MCF 10A (cell line): ENCODE measurements at regions of chr1 and their contacts with region 1.

Region 1: GRCh38 chr1:170545476-170545875 is 13.5 kb downstream of the GORAB start:
- DNase-seq: peak; percentile 53
- H3K4me3 Mint-ChIP-seq: no peak overlapping the region
- H3K27ac Mint-ChIP-seq: peak overlapping the region; percentile 80
- H3K4me1 Mint-ChIP-seq: peaks cover 12% of the 10 kb centered on the region
- H3K27me3 Mint-ChIP-seq: no peaks in the 10 kb centered on the region
- CTCF ChIP-seq: no peak

Region 2: GRCh38 chr1:169999761-170000160 is 545.7 kb before region 1 on chr1:
- CTCF ChIA-PET with region 1: no interaction called
- POLR2A ChIA-PET with region 1: no interaction called
- intact Hi-C with region 1: loop called (anchors 10 kb)
- DNase-seq: no peak
- H3K4me3 Mint-ChIP-seq: no peak overlapping the region
- H3K27ac Mint-ChIP-seq: peak overlapping the region; percentile 70
- H3K4me1 Mint-ChIP-seq: peaks cover 9% of the 10 kb centered on the region
- H3K27me3 Mint-ChIP-seq: no peaks in the 10 kb centered on the region
- CTCF ChIP-seq: no peak

Region 3: GRCh38 chr1:170520601-170521000 is 24.9 kb before region 1 on chr1:
- CTCF ChIA-PET with region 1: no interaction called
- POLR2A ChIA-PET with region 1: no interaction called
- intact Hi-C with region 1: no loop called
- DNase-seq: no peak
- H3K4me3 Mint-ChIP-seq: no peak overlapping the region
- H3K27ac Mint-ChIP-seq: no peak overlapping the region
- H3K4me1 Mint-ChIP-seq: no peaks in the 10 kb centered on the region
- H3K27me3 Mint-ChIP-seq: peaks cover 25% of the 10 kb centered on the region
- CTCF ChIP-seq: no peak

Region 4: GRCh38 chr1:170670802-170671628 is 125.5 kb after region 1 on chr1:
- CTCF ChIA-PET with region 1: no interaction called
- POLR2A ChIA-PET with region 1: no interaction called
- intact Hi-C with region 1: no loop called
- DNase-seq: no peak
- H3K4me3 Mint-ChIP-seq: no peak overlapping the region
- H3K27ac Mint-ChIP-seq: no peak overlapping the region
- H3K4me1 Mint-ChIP-seq: no peaks in the 10 kb centered on the region
- H3K27me3 Mint-ChIP-seq: no peaks in the 10 kb centered on the region
- CTCF ChIP-seq: no peak